ENCODE measurements at regions of chr15 and their contacts with region 1.

Region 1: DNA sequence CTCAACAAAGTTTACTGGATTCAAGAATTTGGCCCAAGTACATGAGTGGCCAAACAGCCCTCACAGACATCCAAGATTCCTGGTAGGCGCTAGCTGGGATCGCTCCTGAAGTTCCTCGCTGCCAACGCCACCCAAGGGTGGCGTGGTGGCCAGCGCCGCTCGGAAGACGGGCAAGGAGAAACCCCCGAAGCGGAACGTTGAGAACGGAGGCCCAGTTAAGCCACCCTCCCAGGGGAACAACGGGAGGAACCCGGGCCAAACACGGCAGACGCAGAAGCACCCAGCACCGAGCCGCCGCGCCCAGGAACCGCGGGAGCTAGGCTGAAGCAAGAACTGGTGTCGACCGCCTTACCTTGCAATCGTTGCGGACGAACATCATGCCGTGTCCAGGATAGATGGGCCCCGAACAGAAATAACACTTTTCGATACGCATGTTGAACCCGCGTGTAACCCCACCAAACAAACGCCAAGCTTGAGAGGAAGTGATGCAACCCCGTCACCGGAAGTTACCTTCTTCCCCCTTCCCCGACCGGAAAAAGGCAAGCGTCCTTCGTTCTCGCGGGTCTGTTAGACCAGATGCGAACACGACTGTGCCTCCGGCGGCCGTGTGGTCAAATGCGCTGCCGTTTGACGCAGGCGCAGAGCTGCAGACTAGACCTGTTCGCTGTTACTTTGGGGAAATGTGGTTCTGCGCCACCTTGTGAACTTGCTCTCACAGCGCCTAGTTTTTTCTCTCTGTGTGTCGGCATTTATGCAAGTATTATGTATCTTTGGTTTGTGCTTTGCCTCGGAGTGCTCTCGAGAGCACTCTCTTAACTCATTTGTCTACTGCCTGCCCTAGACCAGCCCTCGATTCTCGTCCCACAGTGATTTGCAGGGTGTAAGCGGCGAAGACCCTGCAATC is at the start of gene RSL24D1:
- DNase-seq: peak; percentile 84
- ATAC-seq: peak; percentile 95
- H3K4me3 Mint-ChIP-seq: no peak within 1 kb of the TSS
- H3K27ac Mint-ChIP-seq: no peak within 1 kb of the TSS
- H3K4me1 Mint-ChIP-seq: peaks cover 9% of the 10 kb centered on the region
- H3K27me3 Mint-ChIP-seq: no peaks in the 10 kb centered on the region
- CTCF ChIP-seq: no peak
- total RNA-seq, gene RSL24D1: 90.0 and 99.5 TPM in 2 replicates

Region 2: DNA sequence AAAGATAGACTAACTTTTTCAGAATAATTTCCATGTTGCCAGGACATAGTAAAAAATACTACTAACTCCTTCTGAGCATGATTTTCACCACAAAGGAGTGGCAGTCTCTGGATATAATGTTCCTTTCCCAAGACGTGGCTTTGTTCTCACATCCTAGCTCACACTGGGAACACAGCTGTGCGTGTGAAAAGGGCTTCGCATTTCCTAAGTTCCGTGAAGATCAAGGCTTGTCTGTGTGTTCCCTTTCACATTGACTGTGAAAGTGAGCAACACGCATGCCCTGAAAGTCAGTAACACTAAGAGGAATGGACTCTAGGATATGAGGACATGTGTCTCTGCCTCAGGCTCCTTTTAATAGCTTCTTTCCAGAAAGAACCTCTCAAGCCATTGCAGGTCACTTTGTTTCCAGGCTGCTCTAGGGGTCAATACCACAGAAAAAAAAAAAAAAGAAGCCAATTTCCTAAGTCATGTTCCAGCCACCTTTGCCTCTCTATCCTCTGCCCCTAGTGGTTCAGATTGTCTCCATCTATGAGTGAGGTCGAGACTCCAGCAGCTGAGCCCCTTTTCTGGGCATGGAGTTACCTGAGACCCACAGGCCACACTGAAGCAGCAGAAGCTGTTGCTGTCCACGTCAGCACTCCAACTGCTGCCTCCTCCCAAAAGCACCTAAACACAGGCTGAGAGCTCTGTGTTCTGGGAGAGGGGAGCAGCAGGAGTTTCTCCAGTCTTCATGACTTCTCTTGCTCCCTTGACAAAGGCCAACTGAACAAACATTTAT is 355.9 kb before region 1 on chr15:
- CTCF ChIA-PET with region 1: no interaction called
- POLR2A ChIA-PET with region 1: no interaction called
- intact Hi-C with region 1: no loop called
- DNase-seq: no peak
- ATAC-seq: no peak
- H3K4me3 Mint-ChIP-seq: no peak overlapping the region
- H3K27ac Mint-ChIP-seq: no peak overlapping the region
- H3K4me1 Mint-ChIP-seq: no peaks in the 10 kb centered on the region
- H3K27me3 Mint-ChIP-seq: no peaks in the 10 kb centered on the region
- CTCF ChIP-seq: no peak

Region 3: DNA sequence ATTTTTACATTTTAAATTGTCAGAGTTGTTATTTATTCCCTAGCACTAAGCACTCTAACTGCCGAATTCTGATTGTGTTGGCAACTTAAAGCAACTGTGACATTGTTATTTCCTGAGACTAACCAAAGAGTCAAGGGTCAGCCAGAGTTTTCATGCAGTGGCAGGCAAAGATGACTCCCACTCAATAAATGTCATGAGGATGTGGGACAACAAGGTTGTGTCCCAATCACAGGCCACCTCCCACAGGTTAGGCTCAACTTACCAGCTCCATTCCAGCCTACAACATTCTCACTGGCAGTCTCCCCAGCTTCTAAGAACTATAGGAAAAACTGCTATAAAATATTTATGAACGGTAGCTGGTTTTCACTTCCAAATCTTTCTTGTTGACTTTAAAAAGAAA is 80.1 kb before region 1 on chr15:
- CTCF ChIA-PET with region 1: no interaction called
- POLR2A ChIA-PET with region 1: no interaction called
- intact Hi-C with region 1: no loop called
- DNase-seq: no peak
- ATAC-seq: no peak
- H3K4me3 Mint-ChIP-seq: no peak overlapping the region
- H3K27ac Mint-ChIP-seq: no peak overlapping the region
- H3K4me1 Mint-ChIP-seq: no peaks in the 10 kb centered on the region
- H3K27me3 Mint-ChIP-seq: no peaks in the 10 kb centered on the region
- CTCF ChIP-seq: no peak

Region 4: DNA sequence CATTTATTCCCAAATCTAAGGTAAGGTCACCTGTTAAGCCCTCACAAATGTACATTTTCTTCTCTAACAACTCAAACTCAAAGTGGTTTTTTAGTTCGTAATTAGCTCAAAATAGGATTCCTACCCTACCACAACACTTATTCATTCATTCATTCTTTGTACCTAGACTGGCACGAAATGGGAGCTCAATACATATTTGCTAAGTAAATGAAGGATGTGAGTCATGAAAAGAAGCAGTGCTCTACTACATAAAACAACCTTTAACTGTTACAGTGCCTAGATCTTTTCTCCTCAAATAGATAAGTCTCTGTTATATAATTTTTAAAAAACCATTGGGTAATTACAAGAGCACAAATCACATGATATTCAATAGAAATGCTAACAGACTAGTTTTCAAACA is 13.0 kb before region 1 on chr15:
- CTCF ChIA-PET with region 1: interaction called, 3 read pairs
- POLR2A ChIA-PET with region 1: interaction called, 4 read pairs
- intact Hi-C with region 1: loop called (anchors 1 kb)
- DNase-seq: no peak
- ATAC-seq: no peak
- H3K4me3 Mint-ChIP-seq: no peak overlapping the region
- H3K27ac Mint-ChIP-seq: no peak overlapping the region
- H3K4me1 Mint-ChIP-seq: peaks cover 10% of the 10 kb centered on the region
- H3K27me3 Mint-ChIP-seq: no peaks in the 10 kb centered on the region
- CTCF ChIP-seq: no peak

Region 5: DNA sequence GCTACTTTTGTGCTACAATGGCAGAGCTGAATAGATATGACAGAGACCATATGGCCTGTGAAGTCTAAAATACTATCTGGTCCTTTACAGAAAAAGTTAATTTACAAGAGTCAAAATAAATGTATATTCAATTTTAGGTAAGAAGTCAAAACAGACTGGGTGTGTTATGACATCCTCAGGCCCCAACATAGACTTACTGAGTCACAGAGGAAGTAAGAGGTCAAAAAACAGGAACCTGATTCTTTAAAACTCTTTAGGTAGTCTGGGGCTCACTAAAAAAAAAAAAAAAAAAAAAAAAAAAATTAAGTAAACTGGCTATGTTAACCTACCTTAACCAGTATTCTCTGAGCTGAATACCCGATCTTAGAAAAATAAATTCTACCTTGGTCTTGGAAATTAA is 298.2 kb after region 1 on chr15:
- CTCF ChIA-PET with region 1: no interaction called
- POLR2A ChIA-PET with region 1: no interaction called
- intact Hi-C with region 1: loop called (anchors 5 kb)
- DNase-seq: no peak
- ATAC-seq: peak; percentile 41
- H3K4me3 Mint-ChIP-seq: no peak overlapping the region
- H3K27ac Mint-ChIP-seq: no peak overlapping the region
- H3K4me1 Mint-ChIP-seq: peaks cover 18% of the 10 kb centered on the region
- H3K27me3 Mint-ChIP-seq: no peaks in the 10 kb centered on the region
- CTCF ChIP-seq: no peak